Panc1 (cell line): ENCODE measurements at regions of chr7 and their contacts with region 1.

Region 1: GRCh38 chr7:98021588-98022351 is 31.8 kb upstream of the OCM2 start:
- DNase-seq: peak; percentile 38
- ATAC-seq: peak; percentile 95
- H3K4me3 ChIP-seq: no peak overlapping the region
- H3K27ac ChIP-seq: no peak overlapping the region
- H3K4me1 ChIP-seq: peaks cover 6% of the 10 kb centered on the region; the same call in 1 of the 2 replicates
- H3K27me3 ChIP-seq: no peaks in the 10 kb centered on the region
- CTCF ChIP-seq: peak; percentile 97

Region 2: DNA sequence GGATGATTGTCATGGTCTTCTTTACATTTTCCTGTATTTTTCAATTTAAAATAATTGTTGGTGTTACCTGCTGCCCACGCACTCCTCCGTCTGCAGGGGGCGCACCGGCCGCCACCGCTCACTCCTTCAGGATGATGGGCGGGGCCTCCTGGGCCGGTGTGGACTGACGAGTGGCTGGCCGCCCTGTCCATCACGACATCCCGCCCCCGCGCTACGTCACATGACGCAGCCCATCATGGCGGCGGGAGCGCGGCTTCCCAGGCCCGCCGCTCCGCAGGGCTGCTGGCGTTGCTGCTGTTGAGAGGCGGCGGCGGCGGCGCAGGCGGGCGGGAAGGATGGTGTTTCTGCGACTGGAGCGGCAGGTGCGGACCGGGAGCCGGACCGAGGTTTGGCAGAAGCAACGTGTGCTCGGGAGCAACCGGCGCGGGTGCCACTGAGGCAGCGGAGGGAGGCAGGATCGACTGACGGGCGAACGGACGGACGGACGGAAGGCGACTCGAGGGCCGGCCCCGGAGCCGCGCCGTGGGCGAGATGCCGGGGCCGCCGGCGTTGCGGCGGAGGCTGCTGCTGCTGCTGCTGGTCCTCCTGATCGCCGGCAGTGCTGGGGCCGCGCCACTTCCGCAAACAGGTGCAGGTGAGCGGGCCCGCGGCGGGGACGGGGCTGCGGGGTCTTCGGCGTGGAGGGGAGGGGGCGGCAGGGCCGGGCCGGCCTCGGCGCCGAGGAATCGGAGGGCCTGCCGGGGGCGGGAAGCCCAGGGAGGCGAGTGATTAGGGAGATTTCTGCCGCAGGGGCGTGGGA is 85.1 kb after region 1 on chr7 and contains the start of gene LMTK2:
- CTCF ChIA-PET with region 1: interaction called, 7 read pairs
- POLR2A ChIA-PET with region 1: no interaction called
- in situ Hi-C with region 1: no loop called
- intact Hi-C with region 1: loop called (anchors 10 kb)
- DNase-seq: no peak
- ATAC-seq: peak; percentile 100
- H3K4me3 ChIP-seq: peak within 1 kb of the TSS; percentile 85 to 90
- H3K27ac ChIP-seq: peak within 1 kb of the TSS; percentile 77
- H3K4me1 ChIP-seq: peaks cover 26% of the 10 kb centered on the region
- H3K27me3 ChIP-seq: no peaks in the 10 kb centered on the region
- CTCF ChIP-seq: peak; percentile 99
- total RNA-seq, gene LMTK2: 25.4 TPM

Region 3: GRCh38 chr7:98168181-98168905 is 146.6 kb after region 1 on chr7:
- CTCF ChIA-PET with region 1: interaction called, 108 read pairs
- POLR2A ChIA-PET with region 1: no interaction called
- in situ Hi-C with region 1: no loop called
- intact Hi-C with region 1: loop called (anchors 1 kb)
- DNase-seq: peak; percentile 61
- ATAC-seq: peak; percentile 71
- H3K4me3 ChIP-seq: no peak overlapping the region
- H3K27ac ChIP-seq: no peak overlapping the region
- H3K4me1 ChIP-seq: peaks cover 5% of the 10 kb centered on the region
- H3K27me3 ChIP-seq: no peaks in the 10 kb centered on the region
- CTCF ChIP-seq: peak; percentile 93

Region 4: GRCh38 chr7:98238976-98239375 is 217.2 kb after region 1 on chr7:
- CTCF ChIA-PET with region 1: no interaction called
- POLR2A ChIA-PET with region 1: no interaction called
- in situ Hi-C with region 1: no loop called
- intact Hi-C with region 1: loop called (anchors 10 kb)
- DNase-seq: no peak
- ATAC-seq: no peak
- H3K4me3 ChIP-seq: no peak overlapping the region
- H3K27ac ChIP-seq: no peak overlapping the region
- H3K4me1 ChIP-seq: no peaks in the 10 kb centered on the region
- H3K27me3 ChIP-seq: no peaks in the 10 kb centered on the region
- CTCF ChIP-seq: no peak